Activated T-helper 2 cell treated with anti-CD3 and anti-CD28 coated beads, Interferon-gamma antibody, Interleukin-2, Interleukin-4, amounts not matched to agents 10 μg/mL and 5 μg/mL and 100 μg/mL, durations not matched to agents 14 hours and 24 hours and 36 hours (primary cell): ENCODE measurements at regions of chr22 and their contacts with region 1.

Region 1: GRCh38 chr22:31313366-31314147 is 21.3 kb upstream of the PIK3IP1 start:
- DNase-seq: peak; percentile 32
- H3K4me3 Mint-ChIP-seq: no peak overlapping the region
- H3K27ac Mint-ChIP-seq: no peak overlapping the region
- H3K4me1 Mint-ChIP-seq: peaks cover 6% of the 10 kb centered on the region
- H3K27me3 Mint-ChIP-seq: no peaks in the 10 kb centered on the region

Region 2: DNA sequence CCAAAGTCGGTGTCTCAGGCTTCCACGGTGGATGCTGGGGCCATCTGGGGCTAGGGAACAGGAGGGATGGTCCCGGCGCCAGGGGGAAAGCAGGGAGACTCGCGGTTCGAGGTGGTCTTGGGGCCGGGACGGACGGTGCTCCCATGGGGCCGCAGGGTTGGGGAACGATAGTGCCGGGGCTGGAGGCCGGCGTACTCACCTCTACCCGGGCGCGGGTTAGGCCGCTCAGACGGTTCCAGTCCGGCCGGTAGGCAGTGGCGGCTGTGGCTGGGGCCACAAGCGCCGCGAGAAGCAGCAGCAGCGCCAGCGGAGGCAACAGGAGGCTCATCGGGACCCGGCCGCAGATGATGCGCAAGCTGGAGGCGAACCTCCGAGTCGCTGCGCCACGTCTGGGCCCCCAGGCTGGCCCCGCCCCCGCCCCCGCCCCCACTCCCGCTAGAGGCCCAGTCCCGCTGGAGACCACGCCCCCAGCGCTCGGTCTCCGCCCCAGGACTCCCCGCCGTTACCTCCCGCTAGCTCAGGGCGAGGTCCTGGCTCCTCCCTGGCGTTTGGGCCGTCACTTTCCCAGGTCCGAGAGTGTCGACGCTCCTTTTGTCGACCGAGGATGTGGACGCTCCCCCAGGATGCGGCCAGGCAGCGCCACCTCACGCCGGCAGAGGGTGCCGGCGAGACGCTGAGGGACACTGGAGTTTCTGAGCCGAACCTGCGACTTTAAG is 206.2 kb before region 1 on chr22 and contains the start of gene SELENOM:
- intact Hi-C with region 1: loop called (anchors 1 kb)
- DNase-seq: peak; percentile 83
- H3K4me3 Mint-ChIP-seq: peak within 1 kb of the TSS; percentile 85
- H3K27ac Mint-ChIP-seq: peak within 1 kb of the TSS; percentile 19
- H3K4me1 Mint-ChIP-seq: peaks cover 10% of the 10 kb centered on the region
- H3K27me3 Mint-ChIP-seq: peaks cover 3% of the 10 kb centered on the region
- total RNA-seq, gene SELENOM: 7.9 and 9.4 TPM in 2 replicates